A549 (cell line): ENCODE measurements at regions of chr6 and their contacts with region 1.

Region 1: DNA sequence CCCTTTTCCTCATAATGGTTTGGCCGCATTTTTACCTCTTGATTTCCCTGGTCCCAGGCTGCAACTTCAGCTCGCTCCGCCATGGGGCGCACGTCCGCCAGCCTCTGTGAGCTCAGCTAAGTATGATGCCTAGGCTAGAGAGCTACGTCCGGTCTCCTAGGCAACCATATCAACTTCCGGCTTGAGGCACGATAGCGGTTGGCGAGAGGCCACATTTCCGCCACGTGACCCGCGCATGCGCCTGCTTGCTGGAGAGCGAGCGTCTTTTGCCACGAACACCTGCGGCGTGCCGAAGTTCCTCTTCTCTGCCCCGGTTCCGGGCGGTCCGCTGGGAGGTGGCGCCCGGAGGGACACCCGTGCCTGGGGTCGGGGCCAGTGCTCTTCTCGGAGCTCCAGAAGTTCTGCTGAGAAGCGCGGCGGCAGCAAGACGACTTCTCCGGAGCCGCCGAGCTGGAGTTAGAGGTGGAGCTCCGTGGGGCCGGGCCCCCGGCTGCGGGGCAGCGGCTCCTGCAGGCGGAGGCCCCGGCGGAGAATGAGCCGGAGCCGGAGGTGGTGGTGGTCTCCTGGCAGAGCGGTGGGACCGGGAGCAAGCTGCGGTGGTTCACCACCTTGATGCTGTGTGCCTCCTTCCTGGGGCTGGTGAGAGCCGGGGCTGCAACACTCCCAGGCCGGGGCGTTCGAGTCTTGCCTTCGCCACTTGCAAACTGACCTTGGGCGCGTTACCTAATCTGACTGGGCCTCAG is 172.0 kb downstream of the SLC16A10 start:
- DNase-seq: peak; percentile 89 to 98
- ATAC-seq: peak; percentile 97 to 98
- H3K4me3 ChIP-seq: peak overlapping the region; percentile 77
- H3K27ac ChIP-seq: peak overlapping the region; percentile 78 to 94
- H3K4me1 ChIP-seq: peaks cover 34% of the 10 kb centered on the region
- CTCF ChIP-seq: peak; percentile 76
- EP300 ChIP-seq: no peak
- POLR2A ChIP-seq: peak; percentile 55
- RAD21 ChIP-seq: peak; percentile 75 to 77

Region 2: GRCh38 chr6:111011360-111012142 is 247.7 kb before region 1 on chr6:
- CTCF ChIA-PET with region 1: interaction called, 14 read pairs
- POLR2A ChIA-PET with region 1: no interaction called
- DNase-seq: peak; percentile 27 to 30
- ATAC-seq: peak; percentile 81 to 82
- H3K4me3 ChIP-seq: no peak overlapping the region
- H3K27ac ChIP-seq: no peak overlapping the region
- H3K4me1 ChIP-seq: no peaks in the 10 kb centered on the region; the same call in 2 of the 3 replicates
- CTCF ChIP-seq: peak; percentile 66
- EP300 ChIP-seq: no peak
- POLR2A ChIP-seq: no peak
- RAD21 ChIP-seq: peak; percentile 61 to 66

Region 3: GRCh38 chr6:111478749-111479148 is 219.5 kb after region 1 on chr6:
- CTCF ChIA-PET with region 1: interaction called, 16 read pairs
- POLR2A ChIA-PET with region 1: interaction called, 14 read pairs
- DNase-seq: peak in 1 of 2 experiments; percentile 60
- ATAC-seq: peak in 1 of 2 experiments; percentile 33; a peak in 2 of 6 replicates
- H3K4me3 ChIP-seq: no peak overlapping the region
- H3K27ac ChIP-seq: no peak overlapping the region
- H3K4me1 ChIP-seq: peaks cover 42% of the 10 kb centered on the region
- CTCF ChIP-seq: peak; percentile 49
- EP300 ChIP-seq: no peak
- POLR2A ChIP-seq: no peak
- RAD21 ChIP-seq: peak; percentile 60 to 67

Region 4: GRCh38 chr6:111483736-111484632 is 224.7 kb after region 1 on chr6:
- CTCF ChIA-PET with region 1: interaction called, 16 read pairs
- POLR2A ChIA-PET with region 1: interaction called, 14 read pairs
- DNase-seq: peak; percentile 66 to 93
- ATAC-seq: peak; percentile 80 to 86
- H3K4me3 ChIP-seq: peak overlapping the region; percentile 97
- H3K27ac ChIP-seq: peak overlapping the region; percentile 99
- H3K4me1 ChIP-seq: peaks cover 30% of the 10 kb centered on the region
- CTCF ChIP-seq: no peak
- EP300 ChIP-seq: no peak
- POLR2A ChIP-seq: peak; percentile 45; the same call in 1 of the 2 replicates
- RAD21 ChIP-seq: no peak

Region 5: GRCh38 chr6:112043032-112044007 is 784.1 kb after region 1 on chr6:
- CTCF ChIA-PET with region 1: interaction called, 6 read pairs
- POLR2A ChIA-PET with region 1: interaction called, 15 read pairs
- DNase-seq: peak; percentile 68 to 86
- ATAC-seq: peak; percentile 98 to 99
- H3K4me3 ChIP-seq: peak overlapping the region; percentile 70
- H3K27ac ChIP-seq: peak overlapping the region; percentile 80 to 85
- H3K4me1 ChIP-seq: peaks cover under 1% of the 10 kb centered on the region; the same call in 1 of the 3 replicates
- CTCF ChIP-seq: peak; percentile 71
- EP300 ChIP-seq: no peak
- POLR2A ChIP-seq: 0 out of 2 replicates have a peak, but pooled peaks have one; percentile 19
- RAD21 ChIP-seq: peak; percentile 83 to 87